Mammary epithelial cell (primary cell): ENCODE measurements at regions of chr9 and their contacts with region 1.

Region 1: GRCh38 chr9:133726401-133727276 is 11.5 kb downstream of the SARDH start:
- DNase-seq: peak; percentile 24
- H3K4me3 ChIP-seq: no peak overlapping the region
- H3K27ac ChIP-seq: no peak overlapping the region
- H3K4me1 ChIP-seq: no peaks in the 10 kb centered on the region
- H3K27me3 ChIP-seq: no peaks in the 10 kb centered on the region
- CTCF ChIP-seq: peak; percentile 30 to 67

Region 2: GRCh38 chr9:133532937-133533668 is 193.5 kb before region 1 on chr9:
- CTCF ChIA-PET with region 1: no interaction called
- dilution Hi-C with region 1: no loop called
- in situ Hi-C with region 1: no loop called
- intact Hi-C with region 1: loop called (anchors 1 kb)
- DNase-seq: peak; percentile 20
- H3K4me3 ChIP-seq: no peak overlapping the region
- H3K27ac ChIP-seq: no peak overlapping the region
- H3K4me1 ChIP-seq: peaks cover 4% of the 10 kb centered on the region
- H3K27me3 ChIP-seq: peaks cover 12% of the 10 kb centered on the region
- CTCF ChIP-seq: peak; percentile 50 to 56

Region 3: GRCh38 chr9:133538851-133539833 is 187.5 kb before region 1 on chr9:
- CTCF ChIA-PET with region 1: no interaction called
- dilution Hi-C with region 1: no loop called
- in situ Hi-C with region 1: no loop called
- intact Hi-C with region 1: loop called (anchors 1 kb)
- DNase-seq: no peak
- H3K4me3 ChIP-seq: no peak overlapping the region
- H3K27ac ChIP-seq: no peak overlapping the region
- H3K4me1 ChIP-seq: peaks cover 20% of the 10 kb centered on the region
- H3K27me3 ChIP-seq: no peaks in the 10 kb centered on the region
- CTCF ChIP-seq: no peak

Region 4: DNA sequence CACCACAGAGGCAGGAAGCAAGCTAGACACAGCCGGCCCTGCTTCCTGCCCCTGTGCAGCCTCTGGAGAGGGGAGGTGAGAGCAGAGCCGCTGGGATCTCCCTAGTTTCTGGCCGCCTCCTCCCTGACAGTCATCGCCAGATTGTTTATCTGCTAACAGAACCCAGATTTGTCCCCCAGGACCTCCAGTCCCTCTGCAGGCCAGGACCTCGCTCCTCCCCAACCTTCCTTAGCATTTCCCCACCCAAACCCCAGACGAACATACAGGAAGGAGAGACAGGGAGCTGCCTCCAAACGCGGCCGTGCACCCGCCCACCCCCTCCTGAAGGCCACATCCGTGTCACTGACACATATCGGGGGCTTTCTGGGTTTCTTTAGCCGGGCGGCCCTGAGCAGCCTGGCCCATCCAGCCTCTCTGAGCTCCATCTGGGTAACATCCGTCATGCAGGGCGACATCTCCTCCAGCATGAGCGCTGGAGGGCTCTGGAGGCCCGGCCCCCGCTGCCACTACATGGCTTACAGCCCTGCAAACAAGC is 43.0 kb before region 1 on chr9:
- CTCF ChIA-PET with region 1: no interaction called
- dilution Hi-C with region 1: no loop called
- in situ Hi-C with region 1: no loop called
- intact Hi-C with region 1: no loop called
- DNase-seq: no peak
- H3K4me3 ChIP-seq: no peak overlapping the region
- H3K27ac ChIP-seq: no peak overlapping the region
- H3K4me1 ChIP-seq: no peaks in the 10 kb centered on the region
- H3K27me3 ChIP-seq: no peaks in the 10 kb centered on the region
- CTCF ChIP-seq: no peak

Region 5: GRCh38 chr9:133945314-133945975 is 218.8 kb after region 1 on chr9:
- CTCF ChIA-PET with region 1: no interaction called
- dilution Hi-C with region 1: no loop called
- in situ Hi-C with region 1: no loop called
- intact Hi-C with region 1: no loop called
- DNase-seq: no peak
- H3K4me3 ChIP-seq: no peak overlapping the region
- H3K27ac ChIP-seq: peak overlapping the region; percentile 0
- H3K4me1 ChIP-seq: peaks cover 25% of the 10 kb centered on the region
- H3K27me3 ChIP-seq: no peaks in the 10 kb centered on the region
- CTCF ChIP-seq: no peak